Psoas muscle (tissue), 8 donors: ENCODE measurements at regions of chr13 and their contacts with region 1.

Region 1: GRCh38 chr13:76886292-76887075 is at the start of gene KCTD12:
- DNase-seq: peak; percentile 89 to 93
- ATAC-seq: peak; percentile 81 to 90 (median 86)
- H3K4me3 ChIP-seq: peak within 1 kb of the TSS; percentile 79
- H3K27ac ChIP-seq: peak within 1 kb of the TSS; percentile 65
- H3K4me1 ChIP-seq: peaks cover 5% of the 10 kb centered on the region
- H3K27me3 ChIP-seq: peaks cover 0 to 30% (median 0%) of the 10 kb centered on the region in 3 donors
- CTCF ChIP-seq: peak; percentile 42
- total RNA-seq, gene KCTD12: 22.4 to 31.3 (median 26.7) TPM

Region 2: GRCh38 chr13:76667551-76667950 is 218.9 kb before region 1 on chr13:
- intact Hi-C with region 1: loop called in 1 of 2 experiments (anchors 5 kb)
- DNase-seq: no peak
- ATAC-seq: peak in 1 of 4 donors; percentile 54
- H3K4me3 ChIP-seq: no peak overlapping the region
- H3K27ac ChIP-seq: no peak overlapping the region
- H3K4me1 ChIP-seq: no peaks in the 10 kb centered on the region
- H3K27me3 ChIP-seq: no peaks in the 10 kb centered on the region
- CTCF ChIP-seq: peak; percentile 11